Uterus (tissue), 4 donors: ENCODE measurements at regions of chr14 and their contacts with region 1.

Region 1: GRCh38 chr14:76784266-76785264 is 23.3 kb downstream of the VASH1 start:
- DNase-seq: peak; percentile 81 to 83
- H3K4me3 ChIP-seq: no peak overlapping the region
- H3K27ac ChIP-seq: no peak overlapping the region
- H3K4me1 ChIP-seq: no peaks in the 10 kb centered on the region
- H3K27me3 ChIP-seq: no peaks in the 10 kb centered on the region
- CTCF ChIP-seq: peak; percentile 89 to 94 (median 90)
- POLR2A ChIP-seq: no peak

Region 2: DNA sequence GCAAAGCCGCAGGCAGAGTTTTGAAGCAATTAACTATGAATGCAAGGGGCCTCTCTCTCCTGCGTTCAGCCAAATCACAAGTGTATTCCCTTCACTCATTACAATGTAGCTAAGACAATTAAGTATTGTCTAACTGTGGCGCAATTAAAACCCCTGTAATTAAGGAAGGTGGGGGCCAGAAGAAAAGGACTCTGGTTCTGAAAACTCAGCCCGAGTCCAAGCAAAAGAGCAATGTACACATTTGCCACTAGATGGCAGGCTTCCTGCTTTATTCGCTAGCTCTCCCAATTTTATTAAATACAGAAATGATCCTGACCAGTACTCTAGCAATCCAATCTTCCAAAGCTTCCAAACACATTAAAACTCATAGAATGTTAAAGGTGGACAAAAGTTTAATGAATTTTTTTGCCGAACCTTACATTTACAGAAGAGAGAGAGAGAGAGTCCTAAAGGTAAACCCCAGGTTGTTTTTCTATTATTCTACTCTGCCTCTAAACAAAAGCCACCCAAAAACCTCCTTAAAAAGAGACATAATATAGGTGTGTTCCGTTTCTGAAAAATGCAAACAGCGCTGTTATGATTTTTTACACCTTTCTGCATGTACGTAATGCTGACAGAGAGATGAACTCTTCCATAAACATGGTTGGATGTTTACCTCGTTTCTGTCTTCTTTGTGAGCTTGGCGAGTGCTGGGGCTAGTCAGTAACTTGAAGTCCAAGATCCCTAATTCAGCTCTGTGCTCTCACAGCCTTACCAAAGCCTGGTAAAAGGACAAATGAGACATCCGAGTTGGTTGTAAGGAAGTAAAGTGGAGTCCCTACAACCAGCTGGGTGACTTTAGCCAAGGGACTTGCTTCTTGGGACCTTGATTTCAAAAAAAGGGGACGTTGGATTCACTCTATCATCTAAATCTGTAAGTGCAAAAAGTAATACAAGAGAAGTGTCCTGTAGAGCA is 74.2 kb before region 1 on chr14:
- intact Hi-C with region 1: loop called (anchors 5 kb)
- DNase-seq: no peak
- H3K4me3 ChIP-seq: no peak overlapping the region
- H3K27ac ChIP-seq: no peak overlapping the region
- H3K4me1 ChIP-seq: no peaks in the 10 kb centered on the region
- H3K27me3 ChIP-seq: no peaks in the 10 kb centered on the region
- CTCF ChIP-seq: peak; percentile 60 to 84 (median 68)
- POLR2A ChIP-seq: no peak